Keratinocyte (primary cell): ENCODE measurements at regions of chr7 and their contacts with region 1.

Region 1: DNA sequence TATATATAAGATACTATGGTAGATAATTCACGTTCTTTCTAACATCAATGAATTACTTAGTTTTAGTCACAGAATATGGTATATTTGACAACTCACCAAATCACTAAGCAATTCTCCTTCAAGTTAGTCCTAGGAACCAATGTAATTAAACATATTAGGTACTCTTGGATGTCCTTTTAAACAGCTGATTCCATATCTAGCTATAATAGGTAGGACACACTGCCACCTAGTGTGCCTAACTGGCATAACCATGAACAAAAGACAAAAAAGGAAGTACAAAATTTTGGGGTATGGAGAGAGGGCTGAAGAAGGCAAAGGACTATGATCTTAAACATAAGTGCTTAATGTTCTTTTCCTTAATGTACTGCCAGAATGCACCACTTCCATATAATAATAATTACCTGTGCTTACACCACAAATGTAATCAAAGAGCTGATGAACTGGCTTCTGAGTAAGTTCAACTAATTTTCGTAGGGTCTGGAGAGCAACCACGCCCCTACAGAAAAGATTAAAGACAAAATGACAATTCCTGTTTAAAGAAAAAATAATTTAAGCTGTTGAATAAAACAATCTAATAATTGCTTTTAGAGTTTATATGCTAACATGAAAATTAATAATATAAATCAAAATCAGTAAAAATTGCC is 28.7 kb downstream of the PNPLA8 start:
- DNase-seq: peak; percentile 28
- H3K4me3 ChIP-seq: no peak overlapping the region
- H3K27ac ChIP-seq: no peak overlapping the region
- H3K4me1 ChIP-seq: no peaks in the 10 kb centered on the region
- H3K27me3 ChIP-seq: no peaks in the 10 kb centered on the region
- CTCF ChIP-seq: peak in 2 of 3 experiments; percentile 60 to 63

Region 2: DNA sequence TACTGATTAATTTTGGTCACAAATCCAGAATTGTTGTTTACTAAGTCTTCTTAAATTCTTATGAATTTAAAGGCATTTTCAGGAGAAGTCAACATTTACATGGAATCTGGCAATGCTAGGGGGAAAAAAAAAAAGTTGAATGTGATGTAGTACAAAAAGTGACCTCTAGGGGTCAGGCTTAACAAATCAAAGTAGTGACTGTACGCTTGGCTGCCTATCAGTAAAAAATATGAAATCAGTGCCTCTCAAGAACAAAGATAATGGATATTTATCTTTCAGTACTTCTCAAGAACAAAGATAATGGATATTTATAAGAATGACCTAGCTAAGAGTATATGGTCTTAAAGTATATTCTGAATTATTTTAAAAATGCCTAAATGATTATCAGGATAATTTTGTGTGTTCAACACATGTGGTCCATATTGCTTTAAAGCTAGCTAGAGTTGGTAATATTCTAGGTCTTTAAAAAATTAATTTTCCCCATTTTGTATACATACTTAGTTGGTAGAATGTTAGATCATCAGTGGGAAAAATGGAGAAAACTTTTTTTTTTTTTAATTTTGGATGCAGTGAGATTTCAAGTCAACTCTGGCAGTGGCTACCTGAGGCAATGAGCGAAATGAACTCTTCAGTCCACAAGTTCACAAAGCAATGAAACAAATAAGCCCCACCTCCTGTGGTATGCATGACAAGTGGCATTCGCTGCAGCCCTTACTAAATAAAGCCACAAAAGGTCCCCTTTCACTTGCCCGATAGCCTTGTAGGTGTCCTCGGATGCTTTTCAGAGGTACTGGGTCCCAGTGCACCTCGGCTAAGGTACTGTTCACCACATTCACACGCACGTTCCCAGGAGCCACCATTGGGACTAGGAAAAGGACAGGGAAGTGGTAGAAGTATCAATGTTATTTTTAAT is 315.9 kb before region 1 on chr7:
- dilution Hi-C with region 1: loop called (anchors 25 kb)
- DNase-seq: no peak
- H3K4me3 ChIP-seq: no peak overlapping the region
- H3K27ac ChIP-seq: no peak overlapping the region
- H3K4me1 ChIP-seq: no peaks in the 10 kb centered on the region
- H3K27me3 ChIP-seq: no peaks in the 10 kb centered on the region
- CTCF ChIP-seq: peak in 2 of 3 experiments; percentile 41 to 48